ENCODE measurements at regions of chr5 and their contacts with region 1.

Region 1: DNA sequence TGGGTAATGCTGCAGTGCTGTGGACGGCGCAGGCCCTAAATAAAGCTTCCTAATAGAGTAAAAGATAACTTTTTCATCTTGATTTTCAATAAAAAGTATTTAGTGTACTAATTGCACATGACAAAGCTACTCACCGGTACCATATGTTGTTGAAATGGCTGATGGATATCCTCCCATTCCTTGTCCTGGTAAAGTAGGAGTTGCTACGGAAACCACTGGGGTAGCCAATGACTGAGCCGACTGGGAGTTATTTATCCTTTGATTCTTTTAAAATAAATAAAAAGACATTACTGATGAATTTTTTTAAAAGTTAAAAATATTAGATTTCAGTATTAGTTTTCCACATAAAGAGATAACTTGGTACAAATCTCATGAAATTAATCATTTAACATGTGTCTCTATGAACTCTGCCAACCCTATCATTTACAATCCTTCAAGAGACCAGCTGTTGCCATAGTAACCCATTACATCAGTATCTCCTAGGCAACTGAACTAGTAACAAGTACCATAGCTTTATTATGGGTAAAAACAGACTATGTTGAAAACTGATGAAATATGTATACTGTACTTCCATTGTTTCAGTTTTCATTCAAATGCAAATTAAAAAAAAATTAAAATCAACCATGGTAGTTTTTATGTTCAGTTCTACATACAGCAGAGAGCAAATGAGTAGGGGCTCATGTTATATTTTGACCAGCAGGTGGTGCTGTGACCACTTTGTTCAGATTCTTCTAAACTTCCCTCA is 153.7 kb downstream of the MEF2C start:
- DNase-seq: peak; percentile 14
- H3K4me3 Mint-ChIP-seq: no peak overlapping the region
- H3K27ac Mint-ChIP-seq: no peak overlapping the region
- H3K4me1 Mint-ChIP-seq: peaks cover 4% of the 10 kb centered on the region
- H3K27me3 Mint-ChIP-seq: peaks cover 9% of the 10 kb centered on the region

Region 2: DNA sequence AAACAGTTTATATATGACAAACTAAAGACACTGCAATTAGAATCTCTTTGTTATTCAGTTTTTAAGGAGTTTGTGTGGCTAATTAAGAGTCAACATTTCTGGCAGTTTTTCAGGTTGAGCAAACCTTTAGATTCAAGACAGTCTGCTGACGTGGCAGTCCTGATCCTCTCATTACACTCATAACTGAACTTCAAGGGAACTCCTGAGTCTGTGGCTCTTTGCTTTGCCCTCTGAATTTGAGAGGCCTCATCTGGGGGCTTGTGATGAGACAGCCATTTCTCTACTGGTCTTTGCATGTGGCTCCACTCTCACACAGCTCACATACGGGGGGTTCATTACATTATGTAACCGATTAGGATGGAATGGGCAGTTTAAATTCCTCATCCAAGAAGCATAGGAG is 336.7 kb after region 1 on chr5:
- intact Hi-C with region 1: loop called (anchors 10 kb)
- DNase-seq: peak; percentile 1
- H3K4me3 Mint-ChIP-seq: no peak overlapping the region
- H3K27ac Mint-ChIP-seq: no peak overlapping the region
- H3K4me1 Mint-ChIP-seq: peaks cover 5% of the 10 kb centered on the region
- H3K27me3 Mint-ChIP-seq: peaks cover 2% of the 10 kb centered on the region

Region 3: DNA sequence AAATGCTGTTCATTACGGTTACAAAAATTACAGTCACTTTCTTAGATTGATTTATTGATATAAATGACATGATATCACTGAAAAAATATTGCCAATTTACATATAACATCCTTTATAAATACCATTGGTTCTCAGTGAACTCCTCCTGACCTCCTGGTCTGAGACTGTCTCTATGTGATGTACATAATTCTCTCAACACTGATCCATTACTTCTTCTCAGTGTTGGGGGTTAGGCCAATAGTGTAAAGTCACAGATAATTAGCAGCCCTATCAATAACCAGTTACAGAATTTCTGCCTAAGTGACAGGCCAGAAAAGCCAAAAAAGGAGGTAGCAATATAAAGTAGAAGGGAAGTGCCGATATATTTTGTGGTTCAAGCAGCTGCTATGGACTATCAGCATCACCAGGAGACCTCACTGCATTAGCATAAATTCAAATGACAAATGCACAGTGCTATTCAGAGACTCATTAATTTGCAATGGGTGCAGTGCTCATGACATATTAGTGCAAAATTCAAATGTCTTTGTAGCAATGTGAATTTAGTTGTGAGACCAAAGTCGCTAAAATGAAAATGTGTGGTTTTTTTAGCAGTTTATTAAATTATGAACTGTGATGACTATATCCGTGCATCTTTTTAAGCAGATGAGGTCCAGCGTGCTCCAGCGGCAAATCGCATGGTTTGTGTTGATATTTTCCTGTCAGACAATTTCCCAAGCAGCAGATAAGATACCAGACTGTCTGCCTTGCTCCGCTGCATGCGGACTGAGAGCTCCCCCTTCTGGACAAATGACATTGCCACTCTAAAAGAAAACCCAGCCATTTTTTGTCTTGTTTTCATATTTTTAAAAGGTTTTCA is 1535.7 kb after region 1 on chr5:
- intact Hi-C with region 1: loop called (anchors 1 kb)
- DNase-seq: peak; percentile 6
- H3K4me3 Mint-ChIP-seq: no peak overlapping the region
- H3K27ac Mint-ChIP-seq: no peak overlapping the region
- H3K4me1 Mint-ChIP-seq: no peaks in the 10 kb centered on the region
- H3K27me3 Mint-ChIP-seq: peaks cover 2% of the 10 kb centered on the region

Measured in activated T-helper 1 cell treated with anti-CD3 and anti-CD28 coated beads, Interleukin-12 subunit alpha, Interleukin-12 subunit beta, Interleukin-2, Interleukin-4 antibody, amounts not matched to agents 30 ng/mL and 10 ng/mL and 1 ng/mL, durations not matched to agents 14 hours and 24 hours and 36 hours (primary cell).